Endothelial cell of umbilical vein (primary cell): ENCODE measurements at regions of chr3 and their contacts with region 1.

Region 1: DNA sequence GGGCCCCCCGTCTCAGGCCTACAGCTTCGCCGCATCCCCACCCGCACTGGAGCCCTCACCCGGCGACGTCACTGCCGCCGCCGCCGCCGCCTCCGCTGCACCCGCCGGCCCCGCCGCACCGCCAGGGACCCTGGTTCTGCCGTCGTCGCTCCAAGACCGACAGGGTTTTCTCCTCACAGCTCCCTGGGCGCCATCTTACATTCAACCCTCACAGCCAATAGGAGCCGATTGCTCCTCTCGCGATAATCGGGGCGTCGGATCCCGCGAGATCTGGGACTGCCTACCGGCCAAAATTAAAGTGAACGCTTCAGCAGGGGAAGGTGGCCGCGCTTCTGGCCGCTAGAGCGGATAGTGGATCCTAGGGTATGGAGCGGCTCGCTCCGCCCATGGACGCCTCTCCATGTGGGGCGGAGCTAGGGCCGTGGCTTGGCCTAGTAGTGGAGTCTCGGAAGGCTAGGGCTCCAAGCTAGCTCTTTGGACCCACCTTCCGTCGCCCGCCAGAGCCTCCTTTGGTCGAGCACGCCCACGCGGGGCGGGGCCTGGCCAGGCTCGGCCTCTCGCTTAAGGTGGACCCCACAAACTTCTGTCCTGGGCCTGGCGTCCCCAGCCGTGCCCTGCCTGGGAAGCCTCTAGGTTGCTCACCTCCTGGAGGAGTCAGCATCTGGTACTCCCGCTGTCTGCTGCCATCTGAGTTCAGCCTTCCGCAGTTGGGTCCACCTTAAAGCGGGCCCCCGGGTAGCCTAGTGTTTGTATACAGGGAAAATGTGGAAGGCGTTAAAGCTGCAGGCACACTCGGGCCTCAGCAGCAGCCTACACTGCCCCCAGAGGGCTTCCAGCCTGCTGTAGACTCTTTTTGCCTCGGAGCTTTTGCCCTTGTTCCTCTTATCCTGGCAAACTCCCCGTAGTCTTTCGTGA is at the start of gene QRICH1:
- DNase-seq: peak; percentile 99
- H3K4me3 ChIP-seq: peak within 1 kb of the TSS; percentile 79 to 100 (median 80)
- H3K27ac ChIP-seq: peak within 1 kb of the TSS; percentile 93
- H3K4me1 ChIP-seq: peaks cover 13% of the 10 kb centered on the region
- H3K27me3 ChIP-seq: no peaks in the 10 kb centered on the region
- CTCF ChIP-seq: peak; percentile 64 to 82
- POLR2A ChIP-seq: peak; percentile 13
- total RNA-seq, gene QRICH1: 106 and 116 TPM in 2 replicates

Region 2: DNA sequence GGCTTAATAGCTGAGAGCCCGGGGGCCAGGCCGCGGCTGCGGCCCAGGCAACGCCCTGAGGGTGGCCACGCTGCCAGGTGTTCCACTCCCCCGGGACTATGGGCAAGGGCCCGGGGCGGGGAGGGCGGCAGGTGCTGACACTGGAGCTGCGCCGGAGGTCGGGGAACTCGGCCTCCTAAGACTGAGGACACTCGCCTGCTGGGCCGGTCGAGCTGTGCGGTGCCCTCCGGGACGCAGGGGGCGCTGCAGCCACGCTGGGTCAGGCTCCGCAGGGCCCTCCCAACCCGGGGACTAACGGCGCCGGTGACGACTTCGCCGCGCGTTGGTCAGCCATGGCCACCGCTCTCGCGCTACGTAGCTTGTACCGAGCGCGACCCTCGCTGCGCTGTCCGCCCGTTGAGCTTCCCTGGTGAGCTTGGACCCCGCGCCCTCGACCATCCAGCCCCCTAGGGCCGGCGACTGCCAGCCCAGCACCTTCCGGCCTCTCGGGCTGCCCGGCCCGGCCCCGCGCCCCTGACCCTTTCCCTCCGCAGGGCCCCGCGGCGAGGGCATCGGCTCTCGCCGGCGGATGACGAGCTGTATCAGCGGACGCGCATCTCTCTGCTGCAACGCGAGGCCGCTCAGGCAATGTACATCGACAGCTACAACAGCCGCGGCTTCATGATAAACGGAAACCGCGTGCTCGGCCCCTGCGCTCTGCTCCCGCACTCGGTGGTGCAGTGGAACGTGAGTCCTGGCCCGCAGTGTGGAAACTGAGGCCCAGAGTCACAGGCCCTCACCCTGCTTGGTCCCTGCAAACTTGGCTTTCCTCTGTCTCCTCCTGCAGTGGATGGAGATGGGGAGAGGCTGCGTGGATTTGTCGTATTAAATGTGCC is 72.1 kb before region 1 on chr3 and contains the start of gene NDUFAF3:
- CTCF ChIA-PET with region 1: interaction called, 20 read pairs
- POLR2A ChIA-PET with region 1: interaction called, 19 read pairs
- dilution Hi-C with region 1: no loop called
- intact Hi-C with region 1: loop called (anchors 1 kb)
- DNase-seq: peak; percentile 93
- H3K4me3 ChIP-seq: peak within 1 kb of the TSS; percentile 56 to 59 (median 57)
- H3K27ac ChIP-seq: peak within 1 kb of the TSS; percentile 95
- H3K4me1 ChIP-seq: peaks cover 31% of the 10 kb centered on the region
- H3K27me3 ChIP-seq: no peaks in the 10 kb centered on the region
- CTCF ChIP-seq: peak; percentile 99
- POLR2A ChIP-seq: peak; percentile 96
- total RNA-seq, gene NDUFAF3: 74.5 and 91.1 TPM in 2 replicates

Region 3: GRCh38 chr3:49104483-49105291 is 10.6 kb after region 1 on chr3 and contains the start of gene QARS1:
- CTCF ChIA-PET with region 1: interaction called, 22 read pairs
- POLR2A ChIA-PET with region 1: interaction called, 3 read pairs
- dilution Hi-C with region 1: no loop called
- intact Hi-C with region 1: loop called (anchors 1 kb)
- DNase-seq: peak; percentile 94
- H3K4me3 ChIP-seq: peak within 1 kb of the TSS; percentile 67 to 90 (median 85)
- H3K27ac ChIP-seq: peak within 1 kb of the TSS; percentile 72
- H3K4me1 ChIP-seq: peaks cover 9% of the 10 kb centered on the region
- H3K27me3 ChIP-seq: no peaks in the 10 kb centered on the region
- CTCF ChIP-seq: no peak
- POLR2A ChIP-seq: peak; percentile 90
- total RNA-seq, gene QARS1: 261 and 285 TPM in 2 replicates

Region 4: GRCh38 chr3:49133226-49133951 is 39.3 kb after region 1 on chr3:
- CTCF ChIA-PET with region 1: interaction called, 18 read pairs
- POLR2A ChIA-PET with region 1: interaction called, 9 read pairs
- dilution Hi-C with region 1: no loop called
- intact Hi-C with region 1: loop called (anchors 1 kb)
- DNase-seq: peak; percentile 92
- H3K4me3 ChIP-seq: peak overlapping the region; percentile 58 to 89 (median 83)
- H3K27ac ChIP-seq: peak overlapping the region; percentile 58
- H3K4me1 ChIP-seq: peaks cover 14% of the 10 kb centered on the region
- H3K27me3 ChIP-seq: no peaks in the 10 kb centered on the region
- CTCF ChIP-seq: no peak
- POLR2A ChIP-seq: peak; percentile 76

Region 5: GRCh38 chr3:49276475-49277382 is 182.6 kb after region 1 on chr3 and contains the start of gene C3orf62:
- CTCF ChIA-PET with region 1: no interaction called
- POLR2A ChIA-PET with region 1: no interaction called
- dilution Hi-C with region 1: no loop called
- intact Hi-C with region 1: loop called (anchors 2 kb)
- DNase-seq: peak; percentile 87
- H3K4me3 ChIP-seq: peak within 1 kb of the TSS; percentile 41 to 65 (median 53)
- H3K27ac ChIP-seq: peak within 1 kb of the TSS; percentile 88
- H3K4me1 ChIP-seq: peaks cover 18% of the 10 kb centered on the region
- H3K27me3 ChIP-seq: no peaks in the 10 kb centered on the region
- CTCF ChIP-seq: no peak
- POLR2A ChIP-seq: peak; percentile 77
- total RNA-seq, gene C3orf62: 3.9 and 5.6 TPM in 2 replicates

Region 6: GRCh38 chr3:49411968-49412631 is 318.0 kb after region 1 on chr3 and contains the starts of genes RHOA and TCTA:
- CTCF ChIA-PET with region 1: no interaction called
- POLR2A ChIA-PET with region 1: interaction called, 3 read pairs
- dilution Hi-C with region 1: no loop called
- intact Hi-C with region 1: loop called (anchors 5 kb)
- DNase-seq: peak; percentile 100
- H3K4me3 ChIP-seq: peak within 1 kb of the TSS; percentile 69 to 100 (median 99)
- H3K27ac ChIP-seq: peak within 1 kb of the TSS; percentile 79
- H3K4me1 ChIP-seq: peaks cover 35% of the 10 kb centered on the region
- H3K27me3 ChIP-seq: no peaks in the 10 kb centered on the region
- CTCF ChIP-seq: no peak
- POLR2A ChIP-seq: peak; percentile 99
- total RNA-seq, gene RHOA: 571 and 580 TPM in 2 replicates
- total RNA-seq, gene TCTA: 18.6 and 21.9 TPM in 2 replicates